ENCODE measurements at regions of chr19 and their contacts with region 1.

Region 1: GRCh38 chr19:33771384-33772101 is 25.1 kb upstream of the KCTD15 start:
- DNase-seq: peak; percentile 45
- H3K4me3 ChIP-seq: no peak overlapping the region
- H3K27ac ChIP-seq: no peak overlapping the region
- H3K27me3 ChIP-seq: peaks cover 2% of the 10 kb centered on the region
- CTCF ChIP-seq: peak; percentile 90

Region 2: DNA sequence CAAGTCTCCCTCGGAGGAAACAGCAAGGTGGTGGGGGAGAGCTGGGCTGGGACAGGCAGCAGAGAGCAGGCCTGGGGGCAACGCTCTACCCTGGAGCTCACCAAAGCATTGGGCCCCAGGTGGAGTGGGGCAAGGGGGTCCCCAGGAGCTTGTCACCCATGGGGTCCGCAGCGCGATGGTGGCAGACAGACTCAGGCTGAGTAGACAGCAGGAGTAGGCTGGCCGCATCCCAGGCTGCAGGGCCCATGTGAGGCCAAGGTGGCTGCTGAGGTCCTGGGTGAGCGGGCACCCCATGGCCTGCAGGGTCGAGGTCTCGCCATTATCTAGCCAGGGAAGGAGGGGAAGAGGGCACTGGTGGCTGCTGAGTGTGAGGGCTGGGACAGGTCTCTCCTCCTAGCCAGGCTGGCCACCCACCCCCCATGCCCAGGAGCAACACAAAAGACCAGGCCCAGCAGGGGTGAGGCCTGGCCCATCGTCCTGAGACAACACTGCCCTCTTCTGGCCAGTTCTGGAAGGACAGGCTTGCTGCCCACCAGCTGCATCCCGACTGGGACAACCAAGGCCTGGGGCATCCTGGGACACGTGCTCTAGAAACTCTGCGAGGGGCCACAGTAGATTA is 364.9 kb before region 1 on chr19:
- in situ Hi-C with region 1: loop called (anchors 25 kb)
- DNase-seq: peak; percentile 57
- H3K4me3 ChIP-seq: no peak overlapping the region
- H3K27ac ChIP-seq: no peak overlapping the region
- H3K27me3 ChIP-seq: no peaks in the 10 kb centered on the region
- CTCF ChIP-seq: peak; percentile 92

Measured in brain microvascular endothelial cell (primary cell).